Kidney (tissue), 22 donors: ENCODE measurements at regions of chr4 and their contacts with region 1.

Region 1: DNA sequence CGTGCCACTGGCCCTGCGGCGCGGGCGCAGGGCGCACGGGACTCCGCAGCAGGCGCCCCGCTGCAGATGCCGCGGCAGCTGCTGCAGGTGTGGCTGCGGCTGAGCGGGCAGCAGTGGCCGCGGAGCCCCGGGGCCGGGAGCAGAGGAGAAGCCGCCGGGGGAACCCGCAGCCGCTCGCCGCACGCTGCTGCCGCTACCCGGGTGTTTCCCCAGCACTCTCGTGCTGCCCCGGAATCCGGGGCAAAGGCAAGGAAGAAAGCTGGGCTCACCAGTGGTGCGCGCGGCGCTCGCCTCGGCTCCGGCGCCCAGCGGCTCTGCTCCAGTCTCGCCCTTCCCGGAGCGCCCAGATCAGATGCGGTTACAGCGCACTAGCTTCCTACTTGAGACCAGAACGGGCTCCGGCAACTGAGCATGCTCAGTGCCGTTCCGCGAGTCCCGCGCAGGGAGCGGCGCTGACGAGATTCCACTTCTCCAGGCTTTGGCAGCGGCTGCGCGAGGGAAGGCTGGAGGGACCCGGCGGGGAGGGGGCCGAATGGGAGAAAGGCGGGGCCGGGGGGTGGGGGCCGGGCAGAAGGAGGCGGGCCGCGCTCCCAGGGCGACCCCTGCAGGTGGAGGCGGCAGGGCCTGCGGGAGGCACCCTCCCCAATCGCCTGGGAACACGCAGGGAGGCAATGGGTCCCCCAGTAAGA is at the start of gene APBB2:
- DNase-seq: peak; percentile 98 to 99 (median 98)
- H3K4me3 ChIP-seq: peak within 1 kb of the TSS; percentile 90 to 92 (median 90)
- H3K27ac ChIP-seq: peak within 1 kb of the TSS; percentile 72 to 81
- H3K4me1 ChIP-seq: peaks cover 0 to 15% (median 14%) of the 10 kb centered on the region in 3 donors
- H3K27me3 ChIP-seq: no peaks in the 10 kb centered on the region
- CTCF ChIP-seq: peak; percentile 78
- total RNA-seq, gene APBB2: 65.6 TPM

Region 2: DNA sequence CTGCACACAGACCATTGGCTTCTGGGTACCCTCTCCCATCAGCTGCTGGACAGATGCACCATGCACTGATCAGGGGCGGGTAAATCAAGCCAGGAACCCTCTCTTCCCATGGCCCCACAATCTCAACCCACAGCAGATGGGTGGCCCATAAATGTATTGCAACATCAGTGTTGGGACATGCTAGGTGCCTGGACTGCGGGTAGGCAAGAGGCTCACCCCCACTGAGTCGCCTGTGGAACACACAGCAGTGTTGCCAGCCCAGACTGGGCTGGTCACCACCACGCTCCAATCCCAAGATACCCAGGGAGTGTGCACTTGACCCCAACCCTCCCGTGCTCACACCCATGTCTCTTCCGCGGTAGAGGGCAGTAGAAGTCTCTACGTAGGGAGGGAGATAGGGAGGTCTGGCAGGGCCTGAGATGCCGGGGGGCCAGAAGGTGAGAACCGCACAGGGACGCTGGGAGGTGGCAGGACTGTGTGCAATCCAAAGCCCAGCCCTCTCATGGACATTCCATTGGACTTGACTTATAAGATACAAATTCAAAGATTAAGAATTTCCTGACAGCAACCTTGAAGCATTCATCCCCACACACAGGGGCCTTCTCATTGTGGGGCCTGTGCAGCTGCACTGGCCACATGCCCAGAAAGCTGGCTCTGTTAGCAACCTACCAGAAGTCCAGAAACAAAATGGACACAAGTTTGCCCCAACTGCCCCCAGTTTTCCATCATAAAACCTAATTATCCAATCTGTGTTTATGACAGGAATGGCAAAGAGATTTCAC is 280.8 kb before region 1 on chr4:
- intact Hi-C with region 1: loop called (anchors 10 kb)
- DNase-seq: no peak
- H3K4me3 ChIP-seq: no peak overlapping the region
- H3K27ac ChIP-seq: no peak overlapping the region
- H3K4me1 ChIP-seq: peaks cover 0 to 3% (median 0%) of the 10 kb centered on the region in 3 donors
- H3K27me3 ChIP-seq: no peaks in the 10 kb centered on the region
- CTCF ChIP-seq: no peak